Activated naive CD4-positive, alpha-beta T cell treated with anti-CD3 and anti-CD28 coated beads for 36 hours (primary cell): ENCODE measurements at regions of chrX and their contacts with region 1.

Region 1: GRCh38 chrX:37926700-37927099 is 79.3 kb upstream of the DYNLT3 start:
- DNase-seq: no peak
- H3K4me3 Mint-ChIP-seq: no peak overlapping the region
- H3K27ac Mint-ChIP-seq: no peak overlapping the region
- H3K4me1 Mint-ChIP-seq: no peaks in the 10 kb centered on the region
- H3K27me3 Mint-ChIP-seq: peaks cover 4% of the 10 kb centered on the region

Region 2: DNA sequence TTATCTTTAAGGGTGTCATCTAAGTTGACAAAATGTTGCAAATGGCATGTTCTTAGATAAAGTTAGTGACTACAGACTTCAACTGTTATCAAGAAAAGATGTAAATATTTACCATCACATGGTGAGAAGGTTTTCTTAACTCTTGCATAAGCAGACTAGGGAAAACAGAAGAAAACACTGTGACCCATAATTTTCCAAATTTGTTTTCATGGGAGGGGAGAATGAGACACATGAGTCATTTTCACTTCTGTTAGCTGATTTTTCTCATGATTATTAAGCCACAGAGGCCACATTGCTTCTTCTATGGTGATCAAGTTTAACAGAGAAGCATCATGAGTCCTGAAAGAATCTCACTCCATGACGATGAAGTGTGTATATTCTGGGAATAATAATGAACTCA is 49.5 kb after region 1 on chrX:
- CTCF ChIA-PET with region 1: no interaction called
- intact Hi-C with region 1: loop called (anchors 5 kb)
- DNase-seq: no peak
- H3K4me3 Mint-ChIP-seq: no peak overlapping the region
- H3K27ac Mint-ChIP-seq: no peak overlapping the region
- H3K4me1 Mint-ChIP-seq: peaks cover 8% of the 10 kb centered on the region
- H3K27me3 Mint-ChIP-seq: peaks cover 19% of the 10 kb centered on the region

Region 3: GRCh38 chrX:38166478-38167083 is 239.9 kb after region 1 on chrX:
- CTCF ChIA-PET with region 1: interaction called, 22 read pairs
- intact Hi-C with region 1: loop called (anchors 1 kb)
- DNase-seq: peak; percentile 27
- H3K4me3 Mint-ChIP-seq: no peak overlapping the region
- H3K27ac Mint-ChIP-seq: no peak overlapping the region
- H3K4me1 Mint-ChIP-seq: no peaks in the 10 kb centered on the region
- H3K27me3 Mint-ChIP-seq: no peaks in the 10 kb centered on the region

Region 4: DNA sequence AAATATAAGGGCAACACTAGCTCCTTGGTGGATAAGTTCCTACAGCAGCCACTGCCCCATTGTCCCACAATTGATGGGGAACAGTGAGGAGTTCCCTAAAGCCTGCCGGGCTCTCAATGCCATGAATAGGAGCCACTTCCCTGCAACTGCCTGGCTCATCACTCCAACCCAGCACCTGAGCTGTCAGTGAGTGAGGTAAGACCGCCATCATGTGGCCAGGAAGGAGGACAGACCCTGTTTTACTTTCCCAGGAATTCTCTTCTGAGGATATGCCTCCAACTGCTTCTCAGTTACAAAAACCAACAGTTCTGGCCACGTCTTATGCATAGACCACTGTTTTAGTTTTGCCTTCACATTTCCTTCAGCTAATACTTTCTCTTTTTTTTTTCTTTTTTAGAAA is 248.4 kb after region 1 on chrX:
- CTCF ChIA-PET with region 1: no interaction called
- intact Hi-C with region 1: loop called (anchors 2 kb)
- DNase-seq: peak; percentile 5
- H3K4me3 Mint-ChIP-seq: no peak overlapping the region
- H3K27ac Mint-ChIP-seq: no peak overlapping the region
- H3K4me1 Mint-ChIP-seq: no peaks in the 10 kb centered on the region
- H3K27me3 Mint-ChIP-seq: no peaks in the 10 kb centered on the region